H1 (cell line): ENCODE measurements at regions of chr6 and their contacts with region 1.

Region 1: DNA sequence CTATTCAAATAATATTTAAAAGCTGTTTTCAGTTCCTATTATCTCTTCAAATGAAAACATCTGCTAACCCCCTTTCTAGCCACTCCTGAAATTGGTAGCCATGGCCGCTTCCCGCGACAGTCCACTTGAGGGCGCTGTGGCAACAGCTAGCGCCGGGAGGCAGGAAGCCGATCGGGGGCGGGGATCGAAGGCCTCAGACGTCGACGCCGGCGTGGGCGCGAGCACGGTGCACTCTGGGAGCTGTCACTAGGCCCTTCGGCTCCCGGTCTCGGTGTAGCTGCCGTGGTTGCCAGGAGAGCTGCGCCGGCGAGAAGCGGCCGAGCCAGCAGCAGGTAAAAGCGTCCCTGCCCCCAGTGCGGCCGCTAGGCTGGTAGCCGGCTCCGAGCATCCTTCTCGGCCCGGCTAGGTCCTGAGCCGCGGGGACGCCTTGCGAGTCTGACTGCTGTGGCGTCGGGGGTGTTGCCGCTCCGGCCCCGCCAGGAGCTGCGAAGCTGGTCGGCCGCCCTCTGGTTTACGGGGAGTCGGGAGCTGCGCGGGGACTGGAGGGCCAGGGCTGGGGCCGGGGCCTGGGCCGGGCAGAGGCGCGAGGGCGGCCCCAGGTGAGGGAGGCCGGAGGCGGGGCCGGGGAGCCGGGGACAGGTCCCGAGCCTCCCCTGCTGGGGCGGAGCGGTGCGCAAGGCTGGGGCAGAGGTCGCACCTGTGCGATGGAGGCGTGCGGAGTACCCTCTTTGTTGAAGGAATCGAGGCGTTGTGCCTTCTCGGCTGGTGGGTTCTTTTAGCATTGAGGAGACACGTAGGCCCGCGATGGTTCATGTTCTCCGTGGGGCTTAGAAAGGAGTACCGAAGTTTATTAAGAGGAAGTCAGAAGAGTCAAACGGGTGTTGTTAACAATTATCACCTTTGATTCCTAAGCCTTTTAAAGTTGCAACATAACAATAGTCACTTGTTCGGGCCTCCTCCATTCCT is at the start of gene DOP1A:
- DNase-seq: peak; percentile 85 to 97
- H3K4me3 ChIP-seq: peak within 1 kb of the TSS; percentile 53 to 85 (median 66)
- H3K27ac ChIP-seq: peak within 1 kb of the TSS; percentile 87
- H3K4me1 ChIP-seq: peaks cover 0 to 15% (median 4%) of the 10 kb centered on the region in 4 experiments; a peak in 2 of 7 replicates
- H3K27me3 ChIP-seq: no peaks in the 10 kb centered on the region
- CTCF ChIP-seq: peak; percentile 87 to 94 (median 92)
- EP300 ChIP-seq: peak in 1 of 2 experiments; percentile 56; a peak in 1 of 3 replicates
- POLR2A ChIP-seq: peak; percentile 67 to 72; a peak in 2 of 3 replicates
- RAD21 ChIP-seq: peak; percentile 90 to 95
- total RNA-seq, gene DOP1A: 14.7 and 15.9 TPM in 2 replicates

Region 2: DNA sequence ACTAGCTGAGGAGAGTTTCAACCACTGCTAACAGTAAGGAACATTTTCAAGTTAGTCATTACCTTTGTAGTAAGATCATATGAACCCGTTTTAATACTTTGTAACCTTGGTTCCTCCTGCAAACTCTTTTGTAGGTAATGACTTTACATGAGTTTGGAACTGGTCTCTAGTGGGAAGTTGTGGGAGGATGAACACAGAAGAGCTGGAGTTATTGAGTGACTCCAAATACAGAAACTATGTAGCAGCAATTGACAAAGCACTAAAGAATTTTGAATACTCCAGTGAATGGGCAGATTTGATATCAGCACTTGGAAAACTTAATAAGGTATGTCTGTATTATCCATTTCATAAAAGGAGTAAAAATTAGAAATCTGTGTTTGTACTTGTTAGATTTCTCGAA is 29.1 kb after region 1 on chr6:
- CTCF ChIA-PET with region 1: interaction called, 18 read pairs
- POLR2A ChIA-PET with region 1: no interaction called
- DNase-seq: no peak
- H3K4me3 ChIP-seq: no peak overlapping the region
- H3K27ac ChIP-seq: no peak overlapping the region
- H3K4me1 ChIP-seq: no peaks in the 10 kb centered on the region
- H3K27me3 ChIP-seq: no peaks in the 10 kb centered on the region
- CTCF ChIP-seq: no peak
- EP300 ChIP-seq: no peak
- POLR2A ChIP-seq: no peak
- RAD21 ChIP-seq: no peak

Region 3: GRCh38 chr6:83514866-83515466 is 447.2 kb after region 1 on chr6:
- CTCF ChIA-PET with region 1: interaction called, 35 read pairs
- POLR2A ChIA-PET with region 1: no interaction called
- DNase-seq: no peak
- H3K4me3 ChIP-seq: no peak overlapping the region
- H3K27ac ChIP-seq: no peak overlapping the region
- H3K4me1 ChIP-seq: peaks cover 0 to 4% (median 0%) of the 10 kb centered on the region in 4 experiments; a peak in 3 of 7 replicates
- H3K27me3 ChIP-seq: no peaks in the 10 kb centered on the region
- CTCF ChIP-seq: peak in 2 of 3 experiments; percentile 69; a peak in 3 of 4 replicates
- EP300 ChIP-seq: no peak
- POLR2A ChIP-seq: no peak
- RAD21 ChIP-seq: peak; percentile 92